Body of pancreas (tissue), 4 donors: ENCODE measurements at regions of chr5 and their contacts with region 1.

Region 1: GRCh38 chr5:150486402-150487198 is 21.3 kb upstream of the NDST1 start:
- DNase-seq: peak; percentile 84 to 87 (median 86)
- ATAC-seq: peak; percentile 76
- H3K4me3 ChIP-seq: peak overlapping the region; percentile 93 to 98
- H3K27ac ChIP-seq: peak overlapping the region; percentile 86 to 95 (median 92)
- H3K4me1 ChIP-seq: peaks cover 64% of the 10 kb centered on the region
- H3K27me3 ChIP-seq: no peaks in the 10 kb centered on the region
- CTCF ChIP-seq: peak in 3 of 7 experiments; percentile 12 to 50 (median 39)
- POLR2A ChIP-seq: no peak

Region 2: GRCh38 chr5:150389531-150390266 is 96.9 kb before region 1 on chr5:
- intact Hi-C with region 1: no loop called
- DNase-seq: no peak
- ATAC-seq: no peak
- H3K4me3 ChIP-seq: no peak overlapping the region
- H3K27ac ChIP-seq: no peak overlapping the region
- H3K4me1 ChIP-seq: no peaks in the 10 kb centered on the region
- H3K27me3 ChIP-seq: no peaks in the 10 kb centered on the region
- CTCF ChIP-seq: no peak
- POLR2A ChIP-seq: no peak

Region 3: DNA sequence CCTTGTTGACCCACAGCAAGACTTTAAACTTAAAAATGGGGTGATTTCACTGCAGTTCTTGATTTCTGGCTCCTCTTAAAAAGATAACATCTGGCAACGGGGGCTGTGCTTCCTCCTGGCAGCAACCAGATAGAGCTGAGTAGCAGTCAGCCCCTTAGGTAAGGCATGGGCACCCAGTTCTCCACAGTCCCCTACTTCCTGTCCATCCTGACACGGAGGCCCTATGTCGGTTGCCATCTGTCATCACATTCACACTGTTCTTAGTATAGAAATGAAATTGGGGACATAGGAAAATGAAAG is 85.6 kb before region 1 on chr5:
- intact Hi-C with region 1: no loop called
- DNase-seq: no peak
- ATAC-seq: no peak
- H3K4me3 ChIP-seq: no peak overlapping the region
- H3K27ac ChIP-seq: no peak overlapping the region
- H3K4me1 ChIP-seq: no peaks in the 10 kb centered on the region
- H3K27me3 ChIP-seq: no peaks in the 10 kb centered on the region
- CTCF ChIP-seq: no peak
- POLR2A ChIP-seq: no peak

Region 4: GRCh38 chr5:150436141-150436680 is 50.4 kb before region 1 on chr5:
- intact Hi-C with region 1: no loop called
- DNase-seq: peak; percentile 91 to 95 (median 92)
- ATAC-seq: peak; percentile 94
- H3K4me3 ChIP-seq: no peak overlapping the region
- H3K27ac ChIP-seq: no peak overlapping the region
- H3K4me1 ChIP-seq: no peaks in the 10 kb centered on the region
- H3K27me3 ChIP-seq: no peaks in the 10 kb centered on the region
- CTCF ChIP-seq: peak; percentile 71 to 86 (median 81)
- POLR2A ChIP-seq: no peak

Region 5: DNA sequence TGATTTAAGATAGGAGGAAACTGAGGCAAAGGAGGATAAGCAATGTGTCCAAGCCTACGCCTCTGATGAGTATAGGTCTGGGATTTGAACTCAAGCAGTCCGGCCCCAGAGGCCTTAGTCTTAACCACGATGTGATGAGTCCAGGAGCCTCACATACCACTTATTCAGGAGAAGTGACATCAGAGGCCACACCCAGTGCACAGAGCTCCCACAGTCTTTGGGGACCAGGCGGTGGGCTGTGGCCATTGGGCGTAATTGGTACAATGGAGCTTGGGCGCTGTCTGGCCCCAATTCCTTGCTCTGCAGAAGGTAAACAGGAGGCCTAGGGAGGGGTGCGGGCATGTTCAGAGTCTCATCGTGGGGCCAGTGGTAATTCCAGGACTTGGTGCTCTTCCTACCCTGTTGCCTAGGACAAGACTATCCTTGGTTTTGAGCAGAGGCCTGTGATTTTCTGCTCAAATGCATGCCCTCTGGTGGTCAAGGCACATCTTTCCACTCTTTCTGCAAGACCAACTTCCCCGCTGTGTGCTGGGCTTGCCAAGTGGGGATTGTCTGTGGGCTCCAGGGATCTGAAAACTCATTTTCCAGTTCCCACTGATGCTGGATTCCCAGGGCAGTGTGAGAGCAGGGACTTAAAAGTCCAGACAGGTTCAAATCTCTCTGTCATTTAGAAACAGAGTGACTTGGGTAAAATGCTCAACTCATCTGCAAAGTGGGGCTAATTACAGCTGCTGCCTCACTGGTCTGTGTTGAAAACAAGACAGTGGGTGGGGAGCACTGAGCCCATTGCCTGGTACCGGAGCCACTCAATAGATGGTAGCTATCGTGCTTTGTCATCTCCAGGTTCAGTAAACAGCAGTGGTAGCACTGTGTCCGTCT is 37.1 kb after region 1 on chr5:
- intact Hi-C with region 1: loop called (anchors 5 kb)
- DNase-seq: peak; percentile 49 to 68 (median 58)
- ATAC-seq: peak; percentile 54
- H3K4me3 ChIP-seq: no peak overlapping the region
- H3K27ac ChIP-seq: peak overlapping the region in 3 of 4 donors; percentile 26 to 78 (median 76)
- H3K4me1 ChIP-seq: peaks cover 86% of the 10 kb centered on the region
- H3K27me3 ChIP-seq: no peaks in the 10 kb centered on the region
- CTCF ChIP-seq: peak; percentile 14 to 70 (median 66)
- POLR2A ChIP-seq: no peak